Activated naive CD4-positive, alpha-beta T cell treated with anti-CD3 and anti-CD28 coated beads for 36 hours (primary cell): ENCODE measurements at regions of chr4 and their contacts with region 1.

Region 1: GRCh38 chr4:36399762-36400353 is 118.4 kb downstream of the DTHD1 start:
- DNase-seq: peak; percentile 76
- H3K4me3 Mint-ChIP-seq: no peak overlapping the region
- H3K27ac Mint-ChIP-seq: no peak overlapping the region
- H3K4me1 Mint-ChIP-seq: peaks cover 19% of the 10 kb centered on the region
- H3K27me3 Mint-ChIP-seq: no peaks in the 10 kb centered on the region

Region 2: DNA sequence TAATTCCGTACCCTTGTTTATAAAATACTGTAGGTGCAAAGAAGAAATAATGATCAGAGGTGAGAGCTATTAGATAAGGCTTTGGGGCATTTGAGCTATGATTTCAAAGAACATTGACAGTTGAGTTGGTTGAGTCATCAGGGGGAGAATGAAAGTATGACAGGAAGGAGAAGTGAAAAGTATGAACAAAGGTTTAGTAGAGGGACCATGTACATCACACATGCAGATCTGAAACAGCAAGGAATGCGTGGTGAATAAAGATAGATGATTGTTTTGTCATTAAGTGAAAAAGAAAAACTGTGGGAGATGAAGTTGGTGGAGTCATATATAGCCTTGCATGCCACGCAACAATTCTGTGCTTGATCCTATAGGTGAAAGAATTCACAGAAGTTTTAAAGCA is 318.7 kb before region 1 on chr4:
- CTCF ChIA-PET with region 1: no interaction called
- intact Hi-C with region 1: loop called (anchors 1 kb)
- DNase-seq: peak; percentile 48
- H3K4me3 Mint-ChIP-seq: no peak overlapping the region
- H3K27ac Mint-ChIP-seq: no peak overlapping the region
- H3K4me1 Mint-ChIP-seq: peaks cover 2% of the 10 kb centered on the region
- H3K27me3 Mint-ChIP-seq: no peaks in the 10 kb centered on the region

Region 3: DNA sequence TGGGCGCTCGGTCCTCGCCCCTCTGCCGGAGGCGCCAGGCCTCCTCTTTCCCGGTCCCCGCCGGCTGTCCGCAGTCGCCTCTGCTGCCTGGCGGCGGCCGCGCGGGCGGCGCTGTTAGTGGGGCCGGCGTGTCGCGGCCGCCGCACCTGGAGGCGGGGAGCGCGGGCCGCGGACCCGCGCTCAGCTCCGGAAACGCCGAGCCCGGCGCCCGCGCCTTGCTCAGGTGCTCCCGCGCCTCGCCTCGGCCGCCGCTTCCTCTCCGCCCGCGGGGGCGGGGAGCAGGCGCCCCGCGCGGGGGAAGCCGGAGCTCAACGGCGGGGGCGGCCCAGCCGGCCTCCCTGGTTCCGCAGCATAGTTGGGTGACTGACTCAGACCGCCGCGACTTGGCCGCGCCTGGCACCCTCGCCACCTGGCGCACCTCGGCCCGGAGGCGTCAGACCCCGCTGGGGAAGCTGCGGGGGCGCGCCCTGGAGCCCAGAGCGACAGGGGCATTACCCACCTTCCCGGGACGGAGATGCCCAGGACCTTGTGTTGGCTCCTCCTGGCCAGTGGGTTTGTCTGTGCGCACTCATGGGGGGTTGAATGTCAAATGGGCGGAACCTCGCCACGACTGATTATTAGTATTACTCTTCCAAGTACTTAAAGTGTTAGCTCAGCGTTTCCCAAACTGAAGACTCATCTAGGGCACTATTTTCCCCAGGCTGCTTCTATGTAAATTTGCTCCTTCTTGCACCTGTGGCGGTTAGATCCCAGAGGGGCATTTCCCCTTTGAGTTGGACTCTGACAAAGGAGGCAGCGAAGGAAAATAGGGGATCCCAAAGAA is 155.4 kb before region 1 on chr4 and contains the start of gene ARAP2:
- CTCF ChIA-PET with region 1: interaction called, 18 read pairs
- intact Hi-C with region 1: no loop called
- DNase-seq: peak; percentile 77
- H3K4me3 Mint-ChIP-seq: peak within 1 kb of the TSS; percentile 94
- H3K27ac Mint-ChIP-seq: peak within 1 kb of the TSS; percentile 88
- H3K4me1 Mint-ChIP-seq: peaks cover 24% of the 10 kb centered on the region
- H3K27me3 Mint-ChIP-seq: no peaks in the 10 kb centered on the region
- total RNA-seq, gene ARAP2: 29.6 to 38.2 TPM

Region 4: DNA sequence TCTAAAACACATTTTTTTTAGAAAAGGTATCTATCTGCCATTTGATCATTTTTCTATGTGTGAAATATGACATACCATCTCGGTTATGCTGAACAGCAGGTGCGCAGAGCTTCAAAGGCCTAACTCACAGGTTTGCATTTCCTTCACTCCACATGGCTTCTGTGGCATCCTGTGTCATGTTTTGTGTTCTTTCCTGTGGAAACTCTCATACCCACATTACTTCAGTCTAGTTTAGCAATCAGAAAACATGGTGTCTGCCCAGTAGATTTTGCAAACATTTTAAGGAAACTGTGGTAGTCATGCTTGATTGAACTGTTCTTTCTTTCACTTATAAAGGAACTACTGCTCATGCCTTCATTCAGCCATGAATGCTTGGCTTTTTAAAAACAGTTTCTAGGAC is 144.3 kb before region 1 on chr4:
- CTCF ChIA-PET with region 1: interaction called, 26 read pairs
- intact Hi-C with region 1: loop called (anchors 1 kb)
- DNase-seq: peak; percentile 81
- H3K4me3 Mint-ChIP-seq: peak overlapping the region; percentile 41
- H3K27ac Mint-ChIP-seq: peak overlapping the region; percentile 90
- H3K4me1 Mint-ChIP-seq: peaks cover 30% of the 10 kb centered on the region
- H3K27me3 Mint-ChIP-seq: no peaks in the 10 kb centered on the region

Region 5: GRCh38 chr4:36358173-36358572 is 41.7 kb before region 1 on chr4:
- CTCF ChIA-PET with region 1: interaction called, 24 read pairs
- intact Hi-C with region 1: no loop called
- DNase-seq: no peak
- H3K4me3 Mint-ChIP-seq: no peak overlapping the region
- H3K27ac Mint-ChIP-seq: no peak overlapping the region
- H3K4me1 Mint-ChIP-seq: no peaks in the 10 kb centered on the region
- H3K27me3 Mint-ChIP-seq: no peaks in the 10 kb centered on the region

Region 6: GRCh38 chr4:36385951-36386571 is 13.8 kb before region 1 on chr4:
- CTCF ChIA-PET with region 1: interaction called, 23 read pairs
- intact Hi-C with region 1: loop called (anchors 2 kb)
- DNase-seq: peak; percentile 51
- H3K4me3 Mint-ChIP-seq: no peak overlapping the region
- H3K27ac Mint-ChIP-seq: peak overlapping the region; percentile 60
- H3K4me1 Mint-ChIP-seq: peaks cover 26% of the 10 kb centered on the region
- H3K27me3 Mint-ChIP-seq: no peaks in the 10 kb centered on the region

Region 7: GRCh38 chr4:37715889-37716402 is 1316.1 kb after region 1 on chr4:
- CTCF ChIA-PET with region 1: no interaction called
- intact Hi-C with region 1: loop called (anchors 10 kb)
- DNase-seq: peak; percentile 80
- H3K4me3 Mint-ChIP-seq: no peak overlapping the region
- H3K27ac Mint-ChIP-seq: peak overlapping the region; percentile 77
- H3K4me1 Mint-ChIP-seq: peaks cover 17% of the 10 kb centered on the region
- H3K27me3 Mint-ChIP-seq: peaks cover 4% of the 10 kb centered on the region